MCF 10A (cell line): ENCODE measurements at regions of chr2 and their contacts with region 1.

Region 1: GRCh38 chr2:75602724-75603342 is 42.1 kb upstream of the EVA1A start:
- DNase-seq: peak; percentile 82
- H3K4me3 Mint-ChIP-seq: no peak overlapping the region
- H3K27ac Mint-ChIP-seq: peak overlapping the region; percentile 82
- H3K4me1 Mint-ChIP-seq: peaks cover 69% of the 10 kb centered on the region
- H3K27me3 Mint-ChIP-seq: no peaks in the 10 kb centered on the region
- CTCF ChIP-seq: no peak

Region 2: GRCh38 chr2:75592028-75592427 is 10.8 kb before region 1 on chr2:
- CTCF ChIA-PET with region 1: interaction called, 18 read pairs
- POLR2A ChIA-PET with region 1: interaction called, 44 read pairs
- intact Hi-C with region 1: no loop called
- DNase-seq: peak; percentile 90
- H3K4me3 Mint-ChIP-seq: no peak overlapping the region
- H3K27ac Mint-ChIP-seq: peak overlapping the region; percentile 72
- H3K4me1 Mint-ChIP-seq: peaks cover 48% of the 10 kb centered on the region
- H3K27me3 Mint-ChIP-seq: no peaks in the 10 kb centered on the region
- CTCF ChIP-seq: no peak

Region 3: GRCh38 chr2:75751824-75752468 is 149.1 kb after region 1 on chr2:
- CTCF ChIA-PET with region 1: no interaction called
- POLR2A ChIA-PET with region 1: no interaction called
- intact Hi-C with region 1: no loop called
- DNase-seq: no peak
- H3K4me3 Mint-ChIP-seq: no peak overlapping the region
- H3K27ac Mint-ChIP-seq: no peak overlapping the region
- H3K4me1 Mint-ChIP-seq: peaks cover 5% of the 10 kb centered on the region
- H3K27me3 Mint-ChIP-seq: no peaks in the 10 kb centered on the region
- CTCF ChIP-seq: no peak